ENCODE measurements at regions of chr19 and their contacts with region 1.

Region 1: GRCh38 chr19:50724522-50725217 is 1.5 kb downstream of the CLEC11A start:
- DNase-seq: peak; percentile 75 to 97 (median 88)
- ATAC-seq: peak; percentile 84
- H3K4me3 ChIP-seq: peak overlapping the region; percentile 54
- H3K4me3 Mint-ChIP-seq: peak overlapping the region; percentile 87
- H3K27ac ChIP-seq: peak overlapping the region in 1 of 2 donors; percentile 41
- H3K27ac Mint-ChIP-seq: peak overlapping the region; percentile 70
- H3K4me1 ChIP-seq: peaks cover 34% of the 10 kb centered on the region
- H3K4me1 Mint-ChIP-seq: peaks cover 36% of the 10 kb centered on the region
- H3K27me3 ChIP-seq: peaks cover 59 to 66% of the 10 kb centered on the region in 2 experiments
- H3K27me3 Mint-ChIP-seq: peaks cover 52% of the 10 kb centered on the region
- CTCF ChIP-seq: peak; percentile 50

Region 2: DNA sequence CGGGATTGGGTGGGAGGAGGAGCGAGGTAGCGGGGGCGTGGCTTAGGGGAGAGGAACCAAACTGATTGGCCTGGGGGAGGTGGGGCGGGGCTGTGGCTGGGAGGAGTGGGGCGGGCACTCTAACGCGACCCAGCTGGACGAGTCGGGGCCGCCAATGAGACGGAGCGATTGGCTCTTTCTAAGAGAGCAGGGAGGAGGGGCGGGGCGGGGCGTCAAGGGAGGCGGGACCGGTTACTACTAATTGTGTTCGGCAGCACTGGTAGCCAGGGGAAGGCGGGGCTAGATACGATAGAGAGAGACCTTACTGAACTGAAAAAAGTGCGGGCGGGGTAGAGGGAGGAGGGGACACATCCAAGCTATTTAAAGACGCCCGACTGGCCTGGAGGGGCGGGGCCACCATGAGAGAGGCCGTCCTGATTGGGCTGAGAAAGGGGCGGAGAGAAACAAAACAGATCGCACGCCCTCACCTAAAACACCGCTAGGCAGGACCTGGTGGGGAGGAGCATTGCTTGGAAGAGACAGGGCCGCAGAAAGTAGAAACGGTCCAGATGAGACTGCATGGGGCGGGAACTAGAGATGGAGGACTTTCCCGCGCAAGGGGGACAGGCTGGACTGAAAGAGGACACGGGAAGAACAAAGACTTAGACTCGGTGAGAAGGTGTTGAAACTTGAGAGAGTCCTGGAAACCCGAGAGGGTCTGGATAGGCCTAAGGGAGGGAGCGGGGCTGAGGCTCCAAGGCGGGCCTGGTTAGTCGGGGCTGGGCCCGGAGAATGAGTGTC is 395.3 kb before region 1 on chr19 and contains the start of gene KCNC3:
- CTCF ChIA-PET with region 1: no interaction called
- POLR2A ChIA-PET with region 1: no interaction called
- intact Hi-C with region 1: loop called in 1 of 2 experiments (anchors 10 kb)
- DNase-seq: peak; percentile 79 to 96 (median 92)
- ATAC-seq: peak; percentile 60
- H3K4me3 ChIP-seq: peak within 1 kb of the TSS; percentile 32
- H3K4me3 Mint-ChIP-seq: peak within 1 kb of the TSS; percentile 87
- H3K27ac ChIP-seq: no peak within 1 kb of the TSS
- H3K27ac Mint-ChIP-seq: peak within 1 kb of the TSS; percentile 83
- H3K4me1 ChIP-seq: peaks cover 84% of the 10 kb centered on the region
- H3K4me1 Mint-ChIP-seq: peaks cover 81% of the 10 kb centered on the region
- H3K27me3 ChIP-seq: peaks cover 62 to 63% of the 10 kb centered on the region in 2 experiments
- H3K27me3 Mint-ChIP-seq: peaks cover 73% of the 10 kb centered on the region
- CTCF ChIP-seq: no peak
- total RNA-seq, gene KCNC3: 1.6 to 2.0 TPM

Measured in CD4-positive, alpha-beta T cell (primary cell).